K562 (cell line): ENCODE measurements at regions of chr16 and their contacts with region 1.

Region 1: DNA sequence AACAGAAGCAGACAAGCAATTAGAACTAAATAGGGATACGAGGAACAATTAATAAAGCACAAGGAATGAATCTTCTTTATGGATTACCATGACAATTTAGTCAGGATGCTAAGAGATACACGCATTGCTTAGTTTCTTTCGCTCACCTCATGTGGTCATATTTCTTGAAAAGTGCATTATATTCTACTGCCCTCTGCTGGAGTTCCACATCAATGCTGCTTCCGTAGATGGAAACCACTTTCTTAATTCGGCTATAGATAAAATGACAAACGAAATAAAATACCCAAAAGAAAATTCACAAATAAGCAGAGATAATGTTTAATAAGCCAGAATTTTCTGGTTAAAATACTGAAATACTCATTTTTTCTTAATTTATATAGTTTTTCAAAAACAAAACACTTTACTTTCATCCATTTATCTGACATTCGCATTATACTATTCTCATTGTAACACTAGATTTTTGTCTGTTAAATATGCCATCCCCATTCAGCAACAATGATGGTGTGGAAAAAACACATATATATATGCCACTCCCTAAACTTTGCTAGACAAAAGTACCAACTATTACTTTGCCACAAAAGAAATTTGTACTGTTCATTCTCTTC is 22.0 kb upstream of the PHLPP2 start:
- DNase-seq: peak; percentile 42 to 56 (median 48)
- ATAC-seq: peak; percentile 73
- H3K4me3 ChIP-seq: no peak overlapping the region
- H3K27ac ChIP-seq: no peak overlapping the region
- H3K4me1 ChIP-seq: no peaks in the 10 kb centered on the region
- H3K27me3 ChIP-seq: no peaks in the 10 kb centered on the region
- CTCF ChIP-seq: peak; percentile 50 to 78 (median 71); a peak in 5 of 6 replicates
- EP300 ChIP-seq: no peak
- POLR2A ChIP-seq: no peak
- RAD21 ChIP-seq: peak; percentile 33 to 73; a peak in 2 of 4 replicates

Region 2: DNA sequence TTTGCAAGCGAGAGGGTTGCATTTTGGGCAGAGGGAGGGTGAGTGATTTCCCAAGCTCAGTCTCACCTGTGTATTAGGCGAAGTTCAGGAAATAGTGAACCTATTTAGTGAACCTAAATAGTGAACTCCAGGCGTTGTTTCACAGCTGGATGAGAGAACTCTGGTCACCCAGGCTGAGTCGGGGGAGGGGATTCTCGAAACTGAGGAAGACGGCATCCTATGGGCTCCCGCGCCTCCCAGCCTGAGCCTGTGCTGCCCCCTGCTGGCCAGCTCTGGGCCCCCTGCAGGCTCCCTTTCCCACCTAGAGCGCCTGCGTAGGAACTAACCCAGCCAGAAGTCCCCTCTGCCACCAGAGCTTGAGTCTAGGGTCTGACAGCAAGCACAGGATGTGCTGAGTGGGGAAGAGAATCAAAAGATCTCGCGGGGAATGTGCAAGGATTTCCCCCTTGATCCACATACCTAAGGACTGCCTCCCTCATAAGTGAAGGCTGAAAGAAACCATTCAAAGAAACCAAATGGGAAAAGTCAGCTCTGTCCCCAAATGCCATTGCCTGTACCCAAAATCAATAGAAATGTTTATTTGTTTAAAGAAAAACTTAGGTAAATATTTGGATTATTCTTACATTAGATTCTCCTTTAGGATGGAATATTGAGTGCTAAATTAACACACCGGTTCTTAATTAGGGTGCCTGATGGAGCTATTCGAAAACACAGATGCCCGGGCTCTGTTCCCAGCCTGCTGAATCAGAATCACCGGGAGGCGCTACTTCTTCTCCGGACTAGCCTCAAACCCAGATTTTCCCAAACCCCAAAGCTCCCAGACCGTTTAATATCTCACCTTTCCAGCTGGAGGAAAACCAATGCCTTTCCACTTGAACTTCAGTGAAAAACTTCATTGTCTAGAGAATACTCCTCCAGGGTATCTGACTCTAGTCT is 135.3 kb before region 1 on chr16:
- CTCF ChIA-PET with region 1: no interaction called
- POLR2A ChIA-PET with region 1: no interaction called
- in situ Hi-C with region 1: no loop called
- intact Hi-C with region 1: loop called (anchors 1 kb)
- DNase-seq: peak; percentile 80 to 91 (median 87)
- ATAC-seq: peak; percentile 99
- H3K4me3 ChIP-seq: no peak overlapping the region
- H3K27ac ChIP-seq: no peak overlapping the region
- H3K4me1 ChIP-seq: peaks cover 0 to 3% of the 10 kb centered on the region in 2 experiments; a peak in 1 of 5 replicates
- H3K27me3 ChIP-seq: peaks cover 3 to 17% of the 10 kb centered on the region in 2 experiments; a peak in 3 of 5 replicates
- CTCF ChIP-seq: peak; percentile 90 to 97 (median 95)
- EP300 ChIP-seq: no peak
- POLR2A ChIP-seq: no peak
- RAD21 ChIP-seq: peak; percentile 77 to 87

Region 3: GRCh38 chr16:71645453-71645852 is 101.1 kb before region 1 on chr16:
- CTCF ChIA-PET with region 1: interaction called, 3 read pairs
- POLR2A ChIA-PET with region 1: no interaction called
- in situ Hi-C with region 1: no loop called
- intact Hi-C with region 1: loop called (anchors 10 kb)
- DNase-seq: peak; percentile 19 to 60 (median 34)
- ATAC-seq: peak; percentile 94
- H3K4me3 ChIP-seq: no peak overlapping the region
- H3K27ac ChIP-seq: no peak overlapping the region
- H3K4me1 ChIP-seq: no peaks in the 10 kb centered on the region
- H3K27me3 ChIP-seq: peaks cover 0 to 4% of the 10 kb centered on the region in 2 experiments; a peak in 2 of 5 replicates
- CTCF ChIP-seq: peak; percentile 63 to 79 (median 65)
- EP300 ChIP-seq: no peak
- POLR2A ChIP-seq: no peak
- RAD21 ChIP-seq: peak in 1 of 2 experiments; percentile 49; a peak in 2 of 4 replicates

Region 4: GRCh38 chr16:71762186-71762585 is 15.6 kb after region 1 on chr16:
- CTCF ChIA-PET with region 1: no interaction called
- POLR2A ChIA-PET with region 1: no interaction called
- in situ Hi-C with region 1: no loop called
- intact Hi-C with region 1: no loop called
- DNase-seq: no peak
- ATAC-seq: no peak
- H3K4me3 ChIP-seq: no peak overlapping the region
- H3K27ac ChIP-seq: no peak overlapping the region
- H3K4me1 ChIP-seq: no peaks in the 10 kb centered on the region
- H3K27me3 ChIP-seq: no peaks in the 10 kb centered on the region
- CTCF ChIP-seq: no peak
- EP300 ChIP-seq: no peak
- POLR2A ChIP-seq: no peak
- RAD21 ChIP-seq: no peak

Region 5: DNA sequence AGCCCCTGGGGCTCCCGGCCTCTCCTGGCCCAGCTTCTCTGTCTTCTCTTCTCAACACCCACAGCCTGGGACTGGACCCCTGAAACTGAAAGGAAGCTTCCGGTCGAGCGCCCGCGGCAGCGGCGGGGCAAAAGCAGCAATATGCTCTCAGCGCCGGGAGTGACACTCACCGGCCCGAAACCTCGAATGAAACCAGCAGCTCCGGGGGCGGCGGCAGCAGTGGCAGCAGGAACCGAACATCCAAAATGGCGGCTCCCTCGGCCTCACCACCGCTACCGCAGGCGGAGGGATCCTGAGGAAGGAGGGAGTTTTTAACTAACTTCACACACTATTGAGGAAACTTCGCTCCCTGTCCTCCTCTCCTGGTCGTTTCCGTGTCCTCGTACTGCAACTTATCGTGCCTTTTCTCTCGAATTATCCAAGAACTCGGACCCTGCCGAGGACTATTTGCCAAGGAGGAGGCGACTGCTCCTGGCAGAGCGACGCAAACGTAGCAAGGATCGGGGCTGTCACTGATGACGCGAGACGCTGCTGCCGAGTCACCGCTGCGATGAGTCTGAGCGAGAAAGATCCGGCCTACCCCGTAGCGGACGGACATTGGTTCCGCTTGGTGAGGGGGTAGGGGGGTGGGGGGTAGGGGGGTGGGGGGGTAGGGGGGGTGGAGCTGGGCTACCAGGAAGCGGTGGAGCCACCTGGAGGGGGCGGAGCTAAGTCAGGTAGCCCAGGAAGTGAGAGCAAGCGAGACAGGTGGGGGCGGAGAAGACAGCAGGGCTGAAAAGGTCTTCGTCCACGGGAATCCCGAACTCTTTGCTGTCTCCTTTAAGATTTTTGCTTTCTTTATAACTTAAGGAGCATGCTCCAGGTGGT is 62.3 kb after region 1 on chr16 and contains the start of gene AP1G1:
- CTCF ChIA-PET with region 1: no interaction called
- POLR2A ChIA-PET with region 1: no interaction called
- in situ Hi-C with region 1: no loop called
- intact Hi-C with region 1: no loop called
- DNase-seq: peak; percentile 96 to 98 (median 97)
- ATAC-seq: peak; percentile 93
- H3K4me3 ChIP-seq: peak within 1 kb of the TSS; percentile 68
- H3K27ac ChIP-seq: peak within 1 kb of the TSS; percentile 100
- H3K4me1 ChIP-seq: peaks cover 4 to 8% of the 10 kb centered on the region in 2 experiments; a peak in 4 of 5 replicates
- H3K27me3 ChIP-seq: no peaks in the 10 kb centered on the region; a peak in 1 of 5 replicates
- CTCF ChIP-seq: no peak
- EP300 ChIP-seq: no peak
- POLR2A ChIP-seq: peak; percentile 83
- RAD21 ChIP-seq: no peak
- polyA plus RNA-seq, gene AP1G1: 7.0 to 13.6 TPM